ENCODE measurements at regions of chr11 and their contacts with region 1.

Region 1: GRCh38 chr11:12331239-12331874 is 46.0 kb upstream of the PARVA start:
- DNase-seq: peak; percentile 86
- ATAC-seq: no peak
- H3K4me3 Mint-ChIP-seq: no peak overlapping the region
- H3K27ac Mint-ChIP-seq: no peak overlapping the region
- H3K4me1 Mint-ChIP-seq: peaks cover 3% of the 10 kb centered on the region
- H3K27me3 Mint-ChIP-seq: no peaks in the 10 kb centered on the region
- CTCF ChIP-seq: peak; percentile 86

Region 2: DNA sequence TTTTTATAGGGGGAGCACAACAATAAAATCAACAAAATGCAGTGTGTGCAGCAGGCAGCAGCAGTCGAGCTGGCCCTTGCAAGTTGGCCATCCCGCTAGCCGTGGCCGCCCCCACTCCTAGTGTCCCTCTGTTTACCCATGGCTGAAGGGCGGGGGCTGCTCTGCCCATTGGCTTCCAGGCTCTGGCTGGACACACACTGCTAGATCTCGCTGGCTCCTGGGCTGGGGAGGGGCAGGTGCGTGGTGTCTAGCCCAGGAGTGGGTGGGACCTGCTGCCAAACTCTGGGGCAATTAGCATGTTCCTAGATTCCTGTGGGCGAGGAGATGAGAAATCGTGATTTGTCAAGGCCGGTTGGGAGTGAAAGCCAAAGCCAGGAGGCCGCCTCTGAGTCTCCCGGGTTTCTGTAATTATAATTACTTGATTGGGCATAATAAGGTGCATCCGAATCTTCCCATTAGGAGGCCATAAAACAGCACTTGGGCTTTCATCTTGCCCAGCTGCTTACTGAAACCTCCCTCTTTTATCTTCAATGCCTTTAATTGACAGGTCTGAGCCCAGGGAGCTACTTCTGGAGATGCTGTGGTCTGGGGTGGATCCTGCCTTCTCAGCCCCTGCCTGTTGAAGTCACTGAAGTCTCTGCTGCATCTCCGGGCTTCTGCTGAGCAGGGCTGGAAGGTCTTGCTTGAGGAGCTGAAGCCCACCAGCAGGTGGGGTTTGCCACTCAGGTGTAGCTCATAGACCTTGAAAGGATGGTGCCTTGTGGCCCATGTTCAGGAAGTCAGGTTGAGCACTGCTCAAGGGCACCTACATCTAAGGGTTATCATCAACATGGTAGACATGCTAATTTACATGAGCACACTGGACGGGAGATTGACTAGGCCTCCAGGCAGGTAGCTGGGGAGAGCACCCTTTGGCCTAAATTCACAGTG is 278.4 kb before region 1 on chr11:
- CTCF ChIA-PET with region 1: interaction called, 12 read pairs
- POLR2A ChIA-PET with region 1: no interaction called
- intact Hi-C with region 1: no loop called
- DNase-seq: peak; percentile 58
- ATAC-seq: peak; percentile 71
- H3K4me3 Mint-ChIP-seq: no peak overlapping the region
- H3K27ac Mint-ChIP-seq: no peak overlapping the region
- H3K4me1 Mint-ChIP-seq: no peaks in the 10 kb centered on the region
- H3K27me3 Mint-ChIP-seq: no peaks in the 10 kb centered on the region
- CTCF ChIP-seq: no peak

Region 3: DNA sequence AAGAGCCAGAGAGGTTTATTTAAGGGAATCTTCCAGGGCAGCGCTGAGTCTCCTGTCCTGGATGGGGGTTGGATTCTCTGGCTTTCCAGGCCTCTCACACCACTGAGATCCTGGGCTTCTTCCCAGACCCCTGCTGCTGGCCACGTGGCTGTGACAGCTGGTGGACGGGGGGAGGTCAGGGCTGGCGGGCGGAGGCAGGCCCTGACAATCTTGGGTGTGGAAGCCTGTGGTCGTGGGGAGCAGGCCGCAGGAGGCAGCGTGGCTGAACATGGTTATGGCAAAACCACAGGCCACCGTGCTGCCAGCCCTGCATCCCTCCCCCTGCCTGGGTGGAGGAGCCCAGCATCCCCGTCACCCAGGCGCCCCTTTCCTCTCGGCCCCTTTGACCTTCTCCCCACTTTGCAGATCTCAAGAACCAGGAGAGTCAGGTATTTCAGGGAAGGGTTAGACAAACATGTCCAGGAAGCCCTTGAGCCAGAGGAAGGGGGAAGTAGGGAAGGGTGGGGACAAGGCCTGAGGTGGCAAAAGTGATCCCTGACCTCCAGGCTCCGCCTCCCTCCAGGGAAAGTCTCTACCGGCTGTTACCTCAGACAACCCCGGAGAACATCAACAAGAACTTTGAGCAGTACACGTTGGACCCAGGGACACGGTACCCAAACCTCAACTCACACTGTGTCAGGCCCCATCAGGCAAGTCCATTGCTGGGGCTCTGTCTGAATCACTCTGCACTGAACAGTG is 109.1 kb before region 1 on chr11:
- CTCF ChIA-PET with region 1: no interaction called
- POLR2A ChIA-PET with region 1: no interaction called
- intact Hi-C with region 1: no loop called
- DNase-seq: no peak
- ATAC-seq: no peak
- H3K4me3 Mint-ChIP-seq: no peak overlapping the region
- H3K27ac Mint-ChIP-seq: peak overlapping the region; percentile 34
- H3K4me1 Mint-ChIP-seq: peaks cover 46% of the 10 kb centered on the region
- H3K27me3 Mint-ChIP-seq: no peaks in the 10 kb centered on the region
- CTCF ChIP-seq: no peak

Region 4: DNA sequence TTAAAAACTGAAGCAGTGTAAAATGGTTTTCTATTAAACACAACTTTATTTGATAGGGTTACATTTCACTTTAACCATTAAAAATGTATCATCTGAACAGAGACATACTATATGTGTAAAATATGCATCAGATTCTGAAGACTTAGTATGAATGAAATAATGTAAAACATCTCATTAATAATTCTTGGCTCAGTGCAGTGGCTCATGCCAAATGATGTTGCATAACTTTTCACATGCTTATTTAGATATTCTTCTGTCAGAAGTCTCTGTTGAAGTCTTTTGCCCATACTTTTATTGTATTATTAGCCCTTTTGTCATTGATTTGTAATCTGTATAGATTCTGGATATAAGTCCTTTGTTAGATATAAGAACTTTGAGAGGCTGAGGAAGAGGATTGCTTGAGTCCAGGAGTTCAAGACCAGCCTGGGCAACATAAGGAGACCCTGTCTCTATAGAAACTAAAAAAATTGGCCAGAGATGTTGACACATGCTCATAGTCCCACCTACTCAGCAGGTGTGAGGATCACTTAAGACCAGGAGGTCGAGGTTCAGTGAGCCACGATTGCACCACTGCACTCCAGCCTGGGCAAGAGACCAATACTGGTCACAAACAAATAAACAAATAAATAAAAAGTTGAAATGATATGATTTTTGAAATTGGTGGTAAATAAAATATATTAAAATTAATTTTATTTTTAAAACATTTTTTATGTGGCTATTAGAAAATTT is 27.8 kb before region 1 on chr11:
- CTCF ChIA-PET with region 1: interaction called, 10 read pairs
- POLR2A ChIA-PET with region 1: no interaction called
- intact Hi-C with region 1: no loop called
- DNase-seq: no peak
- ATAC-seq: no peak
- H3K4me3 Mint-ChIP-seq: no peak overlapping the region
- H3K27ac Mint-ChIP-seq: no peak overlapping the region
- H3K4me1 Mint-ChIP-seq: no peaks in the 10 kb centered on the region
- H3K27me3 Mint-ChIP-seq: no peaks in the 10 kb centered on the region
- CTCF ChIP-seq: no peak

Region 5: GRCh38 chr11:12343526-12343925 is 12.2 kb after region 1 on chr11:
- CTCF ChIA-PET with region 1: interaction called, 12 read pairs
- POLR2A ChIA-PET with region 1: no interaction called
- intact Hi-C with region 1: no loop called
- DNase-seq: no peak
- ATAC-seq: no peak
- H3K4me3 Mint-ChIP-seq: no peak overlapping the region
- H3K27ac Mint-ChIP-seq: no peak overlapping the region
- H3K4me1 Mint-ChIP-seq: no peaks in the 10 kb centered on the region
- H3K27me3 Mint-ChIP-seq: no peaks in the 10 kb centered on the region
- CTCF ChIP-seq: no peak

Region 6: GRCh38 chr11:12485328-12485727 is 154.0 kb after region 1 on chr11:
- CTCF ChIA-PET with region 1: interaction called, 14 read pairs
- POLR2A ChIA-PET with region 1: no interaction called
- intact Hi-C with region 1: no loop called
- DNase-seq: no peak
- ATAC-seq: no peak
- H3K4me3 Mint-ChIP-seq: no peak overlapping the region
- H3K27ac Mint-ChIP-seq: no peak overlapping the region
- H3K4me1 Mint-ChIP-seq: no peaks in the 10 kb centered on the region
- H3K27me3 Mint-ChIP-seq: peaks cover 8% of the 10 kb centered on the region
- CTCF ChIP-seq: peak; percentile 5

Region 7: DNA sequence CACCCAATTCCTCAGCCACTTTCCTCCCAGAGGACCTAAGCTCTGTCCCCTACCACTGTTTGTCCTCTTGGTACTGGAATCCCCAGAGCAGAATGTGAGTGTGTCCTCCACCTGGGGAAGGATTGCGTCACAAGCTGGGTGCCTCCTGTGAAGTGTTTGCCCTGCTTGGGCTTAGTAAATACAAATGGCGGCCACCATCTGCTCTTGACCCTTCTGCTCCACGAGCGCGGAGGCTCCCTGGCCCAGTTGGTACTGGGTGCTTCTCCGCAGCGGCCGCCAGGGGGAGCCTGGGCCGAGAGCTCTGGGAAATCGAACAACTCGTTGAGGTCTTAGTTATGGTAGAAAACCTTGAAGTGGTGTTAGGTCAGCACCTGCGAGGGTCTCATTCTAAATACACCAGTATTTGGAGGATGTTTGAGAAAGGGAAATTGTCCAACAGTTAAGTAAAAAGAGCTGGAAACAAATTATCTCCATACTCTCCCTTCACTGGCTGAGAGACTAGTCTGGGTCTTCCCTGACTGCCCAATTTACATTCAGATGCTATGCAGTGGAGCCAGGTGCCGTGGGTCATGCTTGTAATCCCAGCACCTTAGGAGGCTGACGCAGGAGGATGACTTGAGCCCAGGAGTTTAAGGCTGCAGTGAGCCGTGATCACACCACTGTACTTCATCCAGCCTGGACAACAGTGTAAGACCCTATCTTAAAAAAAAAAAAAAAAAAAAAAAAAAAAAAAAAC is 268.2 kb after region 1 on chr11:
- CTCF ChIA-PET with region 1: interaction called, 19 read pairs
- POLR2A ChIA-PET with region 1: no interaction called
- intact Hi-C with region 1: no loop called
- DNase-seq: peak; percentile 46
- ATAC-seq: no peak
- H3K4me3 Mint-ChIP-seq: no peak overlapping the region
- H3K27ac Mint-ChIP-seq: no peak overlapping the region
- H3K4me1 Mint-ChIP-seq: peaks cover 16% of the 10 kb centered on the region
- H3K27me3 Mint-ChIP-seq: peaks cover 27% of the 10 kb centered on the region
- CTCF ChIP-seq: peak; percentile 83

Region 8: DNA sequence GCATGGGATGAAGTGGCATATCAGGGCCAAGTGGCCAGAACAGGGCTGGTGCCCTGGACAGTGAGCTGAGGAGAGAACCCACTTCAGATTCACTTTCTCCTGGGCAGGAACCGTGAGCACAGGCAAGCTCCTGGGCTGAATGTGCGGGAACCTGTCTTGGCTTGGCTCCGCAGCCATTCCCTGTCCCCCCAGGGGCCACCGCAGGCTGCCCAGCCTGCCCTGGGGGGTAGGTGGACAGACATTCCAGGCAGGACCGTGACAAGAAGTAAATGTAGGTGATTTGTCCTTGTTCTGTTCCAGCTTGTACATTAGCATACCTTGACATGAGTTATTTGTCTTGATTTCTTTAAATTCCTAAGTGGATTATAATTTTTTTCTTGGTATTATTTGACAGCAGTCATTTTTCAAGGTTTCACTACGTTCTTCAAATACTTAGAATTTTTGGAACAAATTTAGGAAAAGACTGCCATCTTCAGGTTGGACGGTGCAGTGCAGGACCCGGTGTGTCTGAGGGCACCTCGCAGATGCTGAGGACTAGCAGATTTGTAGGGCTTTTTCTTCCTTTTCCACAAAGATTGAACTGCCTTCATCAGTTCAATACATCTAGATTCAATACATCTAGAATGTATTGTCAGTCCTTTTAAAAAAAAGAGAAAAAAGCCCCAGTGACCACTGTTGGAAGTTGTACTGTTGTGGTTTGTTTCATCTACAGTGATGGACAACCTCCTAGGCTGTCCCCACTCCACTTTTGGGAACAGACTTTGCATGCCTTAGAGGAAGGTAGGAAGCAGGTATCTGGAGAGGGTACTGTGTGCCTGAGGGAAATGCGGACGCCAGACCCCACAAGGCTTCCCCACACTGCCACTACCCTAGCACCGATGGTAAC is 562.7 kb after region 1 on chr11:
- CTCF ChIA-PET with region 1: interaction called, 120 read pairs
- POLR2A ChIA-PET with region 1: interaction called, 3 read pairs
- intact Hi-C with region 1: loop called (anchors 2 kb)
- DNase-seq: peak; percentile 74
- ATAC-seq: peak; percentile 55
- H3K4me3 Mint-ChIP-seq: no peak overlapping the region
- H3K27ac Mint-ChIP-seq: no peak overlapping the region
- H3K4me1 Mint-ChIP-seq: no peaks in the 10 kb centered on the region
- H3K27me3 Mint-ChIP-seq: peaks cover 22% of the 10 kb centered on the region
- CTCF ChIP-seq: peak; percentile 88

Measured in activated CD8-positive, alpha-beta T cell treated with anti-CD3 and anti-CD28 coated beads for 36 hours (primary cell).